Kidney (tissue), 22 donors: ENCODE measurements at regions of chr12 and their contacts with region 1.

Region 1: GRCh38 chr12:122111089-122111641 is 32.6 kb downstream of the MLXIP start:
- DNase-seq: peak in 2 of 5 donors; percentile 58 to 64
- H3K4me3 ChIP-seq: no peak overlapping the region
- H3K27ac ChIP-seq: peak overlapping the region in 1 of 2 donors; percentile 59
- H3K4me1 ChIP-seq: peaks cover 0 to 17% (median 6%) of the 10 kb centered on the region in 3 donors
- H3K27me3 ChIP-seq: no peaks in the 10 kb centered on the region
- CTCF ChIP-seq: no peak

Region 2: DNA sequence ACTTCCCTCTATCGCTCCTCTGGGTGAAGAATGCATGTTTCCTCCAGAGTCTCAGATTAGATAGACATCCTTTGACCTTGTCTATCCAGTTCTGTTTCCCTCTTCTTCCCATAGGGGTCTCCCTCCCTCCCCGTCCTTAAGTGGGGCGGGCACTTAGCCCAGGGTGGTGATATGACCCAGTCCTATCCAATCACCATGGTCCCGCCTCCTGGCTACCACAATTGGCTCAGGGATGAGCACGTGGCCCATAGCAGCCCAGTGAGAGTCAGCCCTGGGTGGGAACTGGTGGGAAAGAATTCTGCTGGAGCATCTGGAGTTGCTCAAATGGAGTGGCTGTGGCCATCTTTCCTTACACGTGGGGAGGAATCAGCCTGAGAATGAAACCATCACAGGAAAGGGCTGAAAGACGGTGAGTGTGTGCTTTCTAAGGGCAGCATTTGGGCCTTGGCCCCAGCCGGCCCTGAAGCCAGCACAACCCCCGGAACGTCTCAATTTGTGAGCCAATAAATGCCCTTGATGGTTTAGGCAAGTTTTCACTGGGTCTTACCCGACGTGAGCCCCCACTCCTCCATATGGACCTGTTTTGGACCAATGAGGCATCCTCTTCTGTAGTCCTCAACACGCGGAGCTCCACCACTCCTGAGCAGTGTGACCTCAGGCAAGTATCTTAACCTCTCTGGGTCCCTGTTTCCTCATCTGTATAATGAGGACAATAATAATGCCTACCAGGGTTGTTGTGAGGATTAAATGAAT is 47.0 kb before region 1 on chr12:
- intact Hi-C with region 1: loop called (anchors 5 kb)
- DNase-seq: peak; percentile 91 to 97 (median 95)
- H3K4me3 ChIP-seq: peak overlapping the region in 2 of 3 donors; percentile 5 to 11
- H3K27ac ChIP-seq: peak overlapping the region; percentile 68 to 83
- H3K4me1 ChIP-seq: peaks cover 11 to 38% (median 34%) of the 10 kb centered on the region in 3 donors
- H3K27me3 ChIP-seq: no peaks in the 10 kb centered on the region
- CTCF ChIP-seq: no peak